B cell (primary cell): ENCODE measurements at regions of chr2 and their contacts with region 1.

Region 1: DNA sequence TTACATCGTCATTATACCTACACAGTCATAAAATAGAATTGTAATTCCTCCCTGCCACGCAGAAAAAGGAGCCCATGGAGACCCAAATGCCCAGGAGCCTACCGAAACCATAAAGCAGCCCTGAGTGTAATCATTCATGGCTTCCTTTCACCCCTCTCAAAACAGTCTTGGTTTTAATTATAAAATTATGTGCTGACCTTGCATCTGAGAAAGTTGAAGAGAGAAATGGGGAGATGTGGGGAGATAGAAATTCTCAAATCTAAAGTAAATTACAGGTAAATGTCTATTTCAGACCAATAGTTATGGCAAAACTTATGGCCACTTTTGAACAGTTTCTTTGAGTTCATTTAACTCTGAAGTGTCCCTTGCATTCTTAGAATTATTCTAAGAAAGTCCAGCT is 1068.8 kb downstream of the BCL11A start:
- DNase-seq: no peak
- ATAC-seq: no peak
- H3K4me3 ChIP-seq: no peak overlapping the region
- H3K4me3 Mint-ChIP-seq: no peak overlapping the region
- H3K27ac ChIP-seq: no peak overlapping the region
- H3K27ac Mint-ChIP-seq: no peak overlapping the region
- H3K4me1 ChIP-seq: no peaks in the 10 kb centered on the region
- H3K4me1 Mint-ChIP-seq: no peaks in the 10 kb centered on the region
- H3K27me3 ChIP-seq: no peaks in the 10 kb centered on the region
- H3K27me3 Mint-ChIP-seq: no peaks in the 10 kb centered on the region
- CTCF ChIP-seq: no peak

Region 2: GRCh38 chr2:59131452-59131851 is 353.2 kb before region 1 on chr2:
- CTCF ChIA-PET with region 1: no interaction called
- POLR2A ChIA-PET with region 1: no interaction called
- intact Hi-C with region 1: loop called (anchors 10 kb)
- DNase-seq: no peak
- ATAC-seq: no peak
- H3K4me3 ChIP-seq: no peak overlapping the region
- H3K4me3 Mint-ChIP-seq: no peak overlapping the region
- H3K27ac ChIP-seq: no peak overlapping the region
- H3K27ac Mint-ChIP-seq: no peak overlapping the region
- H3K4me1 ChIP-seq: no peaks in the 10 kb centered on the region
- H3K4me1 Mint-ChIP-seq: no peaks in the 10 kb centered on the region
- H3K27me3 ChIP-seq: peaks cover 0 to 3% (median 0%) of the 10 kb centered on the region in 4 experiments
- H3K27me3 Mint-ChIP-seq: peaks cover 22% of the 10 kb centered on the region
- CTCF ChIP-seq: no peak

Region 3: DNA sequence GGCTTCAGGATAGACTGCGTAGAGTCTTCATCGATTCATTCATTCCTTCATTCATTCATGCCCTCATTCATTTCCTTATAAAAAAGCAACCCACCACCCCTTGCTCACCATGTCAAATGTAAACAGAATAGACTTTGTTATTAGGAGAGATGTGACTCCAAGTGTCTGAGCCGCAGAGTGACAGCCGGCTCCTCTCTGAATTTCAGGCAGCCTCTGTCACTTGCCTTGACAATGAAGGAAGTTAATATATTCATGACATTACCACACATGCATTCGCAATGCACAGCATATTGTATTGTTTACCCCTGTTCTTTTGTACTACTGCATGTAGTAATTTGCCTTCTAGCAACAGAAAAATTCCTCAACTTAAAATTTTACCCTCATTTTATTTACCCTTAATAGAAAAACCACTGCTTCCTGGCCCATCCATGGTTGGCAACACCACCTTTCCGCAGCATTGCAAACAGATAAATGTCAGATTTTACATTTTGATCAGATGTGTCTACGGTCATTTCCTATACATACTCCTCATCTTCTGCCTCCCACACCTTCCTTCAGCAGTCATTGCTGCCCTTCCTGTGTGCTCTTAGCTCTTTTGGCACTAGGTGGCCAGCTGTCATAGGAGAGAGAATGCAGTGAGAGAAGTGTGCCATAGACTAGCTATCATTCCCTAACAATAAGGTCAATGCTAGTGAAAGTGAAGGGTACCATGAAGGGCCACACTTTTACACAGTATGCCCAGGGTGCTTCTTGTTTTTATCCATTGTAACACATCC is 22.1 kb before region 1 on chr2:
- CTCF ChIA-PET with region 1: no interaction called
- POLR2A ChIA-PET with region 1: no interaction called
- intact Hi-C with region 1: no loop called
- DNase-seq: no peak
- ATAC-seq: no peak
- H3K4me3 ChIP-seq: no peak overlapping the region
- H3K4me3 Mint-ChIP-seq: no peak overlapping the region
- H3K27ac ChIP-seq: no peak overlapping the region
- H3K27ac Mint-ChIP-seq: no peak overlapping the region
- H3K4me1 ChIP-seq: no peaks in the 10 kb centered on the region
- H3K4me1 Mint-ChIP-seq: no peaks in the 10 kb centered on the region
- H3K27me3 ChIP-seq: peaks cover 0 to 4% (median 0%) of the 10 kb centered on the region in 4 experiments
- H3K27me3 Mint-ChIP-seq: peaks cover 3% of the 10 kb centered on the region
- CTCF ChIP-seq: no peak